ENCODE measurements at regions of chr15 and their contacts with region 1.

Region 1: GRCh38 chr15:78437762-78438302 is at the start of gene IREB2:
- DNase-seq: peak; percentile 98
- ATAC-seq: peak; percentile 85
- H3K4me3 Mint-ChIP-seq: peak within 1 kb of the TSS; percentile 93
- H3K27ac Mint-ChIP-seq: peak within 1 kb of the TSS; percentile 99
- H3K4me1 Mint-ChIP-seq: peaks cover 38% of the 10 kb centered on the region
- H3K27me3 Mint-ChIP-seq: no peaks in the 10 kb centered on the region
- CTCF ChIP-seq: no peak
- total RNA-seq, gene IREB2: 68.2 to 78.7 TPM

Region 2: GRCh38 chr15:78299101-78299930 is 138.5 kb before region 1 on chr15 and contains the start of gene SKIC8:
- CTCF ChIA-PET with region 1: no interaction called
- POLR2A ChIA-PET with region 1: interaction called, 32 read pairs
- intact Hi-C with region 1: no loop called
- DNase-seq: peak; percentile 92
- ATAC-seq: peak; percentile 97
- H3K4me3 Mint-ChIP-seq: peak within 1 kb of the TSS; percentile 96
- H3K27ac Mint-ChIP-seq: peak within 1 kb of the TSS; percentile 92
- H3K4me1 Mint-ChIP-seq: peaks cover 28% of the 10 kb centered on the region
- H3K27me3 Mint-ChIP-seq: no peaks in the 10 kb centered on the region
- CTCF ChIP-seq: no peak
- total RNA-seq, gene SKIC8: 63.0 to 64.5 TPM

Region 3: DNA sequence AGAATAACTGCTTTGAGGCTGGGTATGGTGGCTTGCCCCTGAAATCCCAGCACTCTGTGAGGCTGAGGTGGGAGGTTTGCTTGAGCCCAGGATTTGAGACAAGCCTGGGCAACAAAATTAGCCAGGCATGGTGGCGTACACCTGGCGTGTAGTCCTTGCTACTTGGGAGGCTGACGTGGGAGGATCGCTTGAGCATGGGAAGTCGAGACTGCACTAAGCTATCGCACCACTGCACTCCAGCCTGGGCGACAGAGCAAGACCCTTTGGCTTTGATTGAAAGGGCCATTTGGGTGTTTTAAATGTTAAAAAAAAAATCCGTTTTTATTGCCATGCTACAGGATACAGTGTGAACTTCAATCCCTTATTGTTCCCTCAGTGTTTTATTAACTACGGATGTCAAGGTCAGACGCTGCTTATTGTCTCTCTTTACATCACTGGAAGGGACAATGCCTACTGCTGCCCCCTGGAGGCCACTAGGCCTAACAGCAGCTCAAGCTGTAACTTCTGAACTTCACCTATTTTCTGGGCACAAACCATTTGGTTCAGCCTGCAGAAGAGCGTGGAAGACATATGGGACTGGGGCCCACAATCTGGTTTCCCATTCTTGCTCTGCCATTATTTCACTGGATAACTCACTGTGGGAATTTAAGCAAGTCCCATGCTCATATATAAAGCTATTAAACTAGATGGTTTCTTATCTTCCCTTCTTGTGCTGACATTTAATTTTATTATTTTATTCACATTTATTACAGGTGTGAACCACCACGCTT is 15.1 kb before region 1 on chr15:
- CTCF ChIA-PET with region 1: interaction called, 44 read pairs
- POLR2A ChIA-PET with region 1: interaction called, 7 read pairs
- intact Hi-C with region 1: no loop called
- DNase-seq: peak; percentile 78
- ATAC-seq: peak; percentile 94
- H3K4me3 Mint-ChIP-seq: no peak overlapping the region
- H3K27ac Mint-ChIP-seq: no peak overlapping the region
- H3K4me1 Mint-ChIP-seq: peaks cover 17% of the 10 kb centered on the region
- H3K27me3 Mint-ChIP-seq: peaks cover 8% of the 10 kb centered on the region
- CTCF ChIP-seq: peak; percentile 91

Region 4: DNA sequence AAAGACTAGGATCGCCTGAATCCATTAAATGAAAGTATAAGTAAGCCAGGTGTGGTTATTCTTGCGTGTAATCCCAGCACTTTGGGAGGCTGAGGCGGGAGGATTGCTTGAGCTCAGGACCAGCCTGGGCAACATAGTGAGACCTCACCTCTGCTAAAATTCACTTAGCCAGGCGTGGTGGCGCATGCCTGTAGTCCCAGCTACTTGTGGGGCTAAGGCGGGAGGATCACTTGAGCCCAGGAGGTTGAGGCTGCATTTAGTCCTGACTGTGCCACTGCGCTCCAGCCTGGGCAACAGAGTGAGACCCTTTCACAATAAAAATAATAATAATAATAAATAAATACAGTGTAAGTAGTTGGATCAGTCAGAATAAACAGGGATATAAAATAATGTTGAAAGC is 44.1 kb after region 1 on chr15:
- CTCF ChIA-PET with region 1: no interaction called
- POLR2A ChIA-PET with region 1: interaction called, 14 read pairs
- intact Hi-C with region 1: no loop called
- DNase-seq: no peak
- ATAC-seq: no peak
- H3K4me3 Mint-ChIP-seq: no peak overlapping the region
- H3K27ac Mint-ChIP-seq: no peak overlapping the region
- H3K4me1 Mint-ChIP-seq: peaks cover 6% of the 10 kb centered on the region
- H3K27me3 Mint-ChIP-seq: no peaks in the 10 kb centered on the region
- CTCF ChIP-seq: no peak

Region 5: DNA sequence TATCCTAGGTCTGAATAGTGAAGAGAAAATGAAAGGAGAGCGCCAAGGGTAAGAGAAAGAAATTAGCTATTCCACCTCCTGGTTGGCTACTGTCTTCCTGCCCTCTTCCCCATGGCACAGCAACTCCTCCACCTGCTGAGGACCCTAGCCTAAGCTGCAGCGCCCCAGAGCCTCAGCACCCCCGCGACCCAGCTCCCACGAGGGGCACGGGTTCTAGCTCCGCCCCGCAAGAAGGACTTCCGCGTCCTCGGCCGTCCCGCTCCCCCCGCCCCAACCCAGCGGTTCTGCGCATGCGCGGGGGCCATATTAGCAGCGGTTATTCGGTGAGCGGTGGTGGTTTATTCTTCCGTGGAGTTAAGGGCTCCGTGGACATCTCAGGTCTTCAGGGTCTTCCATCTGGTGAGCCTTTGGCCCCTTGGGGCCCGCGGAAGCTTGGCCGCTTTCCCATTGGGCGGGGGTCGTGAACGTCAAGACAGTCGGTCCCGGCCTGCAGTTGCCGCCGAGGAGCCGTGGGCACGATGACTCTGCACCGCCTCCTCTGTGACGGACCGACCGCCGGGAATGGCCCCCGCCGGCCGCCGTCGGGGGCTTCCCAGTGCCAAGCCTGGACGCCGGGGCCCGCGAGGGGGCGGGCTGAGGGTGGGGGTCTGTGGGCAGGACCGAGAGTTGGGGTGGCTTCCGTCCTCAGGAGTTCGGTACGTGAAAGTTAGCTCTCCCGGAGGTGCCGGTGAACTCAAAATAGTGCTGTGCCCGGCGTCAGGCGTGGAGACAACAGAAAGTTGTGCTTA is 102.5 kb after region 1 on chr15 and contains the start of gene PSMA4:
- CTCF ChIA-PET with region 1: no interaction called
- POLR2A ChIA-PET with region 1: interaction called, 19 read pairs
- intact Hi-C with region 1: no loop called
- DNase-seq: peak; percentile 95
- ATAC-seq: peak; percentile 87
- H3K4me3 Mint-ChIP-seq: peak within 1 kb of the TSS; percentile 98
- H3K27ac Mint-ChIP-seq: peak within 1 kb of the TSS; percentile 99
- H3K4me1 Mint-ChIP-seq: peaks cover 22% of the 10 kb centered on the region
- H3K27me3 Mint-ChIP-seq: no peaks in the 10 kb centered on the region
- CTCF ChIP-seq: no peak
- total RNA-seq, gene PSMA4: 256 to 257 TPM

Measured in activated CD8-positive, alpha-beta T cell treated with anti-CD3 and anti-CD28 coated beads for 36 hours (primary cell).